ENCODE measurements at regions of chr7 and their contacts with region 1.

Region 1: GRCh38 chr7:3103614-3104398 is 60.1 kb upstream of the CARD11 start:
- DNase-seq: no peak
- H3K4me3 Mint-ChIP-seq: no peak overlapping the region
- H3K27ac Mint-ChIP-seq: peak overlapping the region; percentile 32
- H3K4me1 Mint-ChIP-seq: peaks cover 70% of the 10 kb centered on the region
- H3K27me3 Mint-ChIP-seq: no peaks in the 10 kb centered on the region

Region 2: DNA sequence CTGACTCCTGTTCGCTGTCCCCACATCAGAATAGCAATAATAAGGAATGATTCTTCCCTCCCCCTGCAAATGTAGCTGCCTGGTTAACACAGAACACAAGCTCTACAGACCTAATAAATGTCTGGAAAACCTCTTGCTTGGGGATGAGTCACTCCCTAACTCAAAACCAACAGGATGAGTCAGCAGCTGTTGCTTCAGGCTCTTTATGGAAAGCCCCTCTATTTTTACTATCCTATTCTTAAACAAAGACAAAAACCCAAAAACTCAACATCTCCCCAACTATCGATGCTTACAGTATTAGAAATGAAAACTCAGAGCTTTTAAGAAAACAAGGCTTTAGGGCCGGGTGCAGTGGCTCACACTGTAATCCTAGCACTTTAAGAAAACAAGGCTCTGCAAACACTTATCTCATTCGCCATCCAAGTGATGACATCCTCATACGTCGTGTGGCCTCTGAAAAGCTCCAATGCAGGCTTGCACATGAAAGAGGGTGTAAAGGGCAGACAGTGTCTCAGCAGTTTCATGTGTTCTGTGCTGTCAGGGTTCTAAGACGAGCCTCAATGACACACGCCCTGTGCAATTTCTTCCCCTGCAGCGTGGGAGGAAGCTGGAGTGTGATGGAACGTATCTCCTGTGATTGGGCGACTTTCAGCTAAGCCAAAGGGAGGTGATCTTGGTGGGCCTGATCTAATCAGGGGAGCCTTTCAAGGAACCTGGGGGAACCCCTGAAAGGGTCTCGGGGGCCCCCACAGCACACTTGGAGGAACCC is 345.7 kb before region 1 on chr7:
- intact Hi-C with region 1: loop called (anchors 5 kb)
- DNase-seq: peak; percentile 72
- H3K4me3 Mint-ChIP-seq: peak overlapping the region; percentile 59
- H3K27ac Mint-ChIP-seq: peak overlapping the region; percentile 95
- H3K4me1 Mint-ChIP-seq: peaks cover 63% of the 10 kb centered on the region
- H3K27me3 Mint-ChIP-seq: no peaks in the 10 kb centered on the region

Region 3: DNA sequence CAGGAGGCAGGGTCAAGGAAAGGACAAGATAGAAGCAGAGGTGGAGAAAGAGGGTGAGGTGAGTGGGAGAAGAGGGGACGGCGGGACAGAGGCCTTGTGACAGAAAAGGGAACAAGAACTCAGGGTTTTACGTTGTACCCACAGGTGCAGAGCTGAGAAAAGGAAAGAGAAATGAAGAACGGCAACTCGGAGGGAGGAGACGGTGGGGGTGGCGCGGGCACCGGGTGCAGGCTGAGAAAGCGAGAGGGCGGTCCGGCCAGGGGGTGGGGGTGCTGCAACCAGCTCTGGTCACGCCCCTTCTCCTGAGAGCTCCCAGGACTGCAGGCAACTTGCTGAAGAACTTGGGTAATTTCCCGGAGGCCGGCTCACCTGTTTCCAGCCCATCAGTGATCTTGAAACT is 125.4 kb before region 1 on chr7:
- intact Hi-C with region 1: loop called (anchors 1 kb)
- DNase-seq: peak; percentile 78
- H3K4me3 Mint-ChIP-seq: peak overlapping the region; percentile 67
- H3K27ac Mint-ChIP-seq: peak overlapping the region; percentile 89
- H3K4me1 Mint-ChIP-seq: peaks cover 64% of the 10 kb centered on the region
- H3K27me3 Mint-ChIP-seq: no peaks in the 10 kb centered on the region

Region 4: DNA sequence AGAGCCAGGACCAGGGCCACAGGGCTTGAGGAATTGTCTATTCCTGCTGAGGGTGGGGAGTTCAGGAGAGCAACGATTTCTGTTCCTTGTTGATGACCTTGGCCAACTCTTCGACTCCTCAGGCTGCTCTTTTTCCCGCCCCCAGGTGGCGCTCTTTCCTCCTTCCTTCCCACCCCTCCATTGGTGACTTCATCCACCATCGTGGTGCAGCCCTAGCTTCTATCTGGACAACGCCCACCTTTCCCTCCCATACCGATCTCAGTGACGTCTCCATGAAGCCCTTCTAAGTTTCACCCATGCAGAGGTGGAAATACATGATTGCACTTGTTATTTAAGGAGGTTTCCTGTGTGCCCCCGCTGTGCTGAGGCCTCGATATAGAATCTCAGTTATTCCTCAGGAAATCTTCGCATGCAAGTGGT is 38.1 kb before region 1 on chr7:
- intact Hi-C with region 1: loop called (anchors 1 kb)
- DNase-seq: peak; percentile 37
- H3K4me3 Mint-ChIP-seq: no peak overlapping the region
- H3K27ac Mint-ChIP-seq: peak overlapping the region; percentile 78
- H3K4me1 Mint-ChIP-seq: peaks cover 88% of the 10 kb centered on the region
- H3K27me3 Mint-ChIP-seq: no peaks in the 10 kb centered on the region

Region 5: DNA sequence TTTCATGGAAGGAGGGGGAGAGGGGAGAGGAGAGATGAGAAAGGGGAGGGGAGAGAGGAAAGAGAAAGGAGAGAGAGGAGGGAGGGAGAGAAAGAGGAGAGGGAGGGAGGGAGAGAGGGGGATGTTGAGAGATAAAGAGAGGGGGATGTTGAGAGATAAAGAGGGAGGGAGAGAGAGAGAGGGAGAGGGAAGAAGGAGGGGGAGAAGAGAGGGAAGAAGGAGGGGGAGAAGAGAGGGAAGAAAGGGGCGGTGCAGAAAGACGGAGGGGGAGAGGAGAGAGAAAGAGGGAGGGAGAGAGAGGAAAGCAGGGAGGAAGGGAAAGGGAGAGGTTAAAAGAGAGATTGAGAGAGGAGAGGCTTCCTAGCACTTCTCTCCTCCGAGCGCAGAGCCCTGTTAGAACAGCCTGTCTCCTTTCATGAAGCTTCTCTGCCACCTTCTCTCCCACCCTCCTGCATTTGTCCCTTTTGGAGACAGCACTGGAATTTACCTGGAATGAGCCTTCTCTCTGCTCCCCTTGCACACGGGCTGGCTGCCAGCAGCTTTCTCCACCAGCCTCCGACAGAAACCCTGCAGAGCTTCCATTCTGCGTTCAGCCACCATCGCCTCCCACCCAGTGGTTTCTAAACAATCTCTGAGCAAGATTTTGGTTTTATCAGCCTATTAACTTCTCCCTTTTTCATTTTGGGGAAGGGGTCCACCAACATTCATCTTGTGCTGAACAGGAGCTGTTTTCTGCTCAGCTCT is 13.9 kb after region 1 on chr7:
- intact Hi-C with region 1: loop called (anchors 1 kb)
- DNase-seq: no peak
- H3K4me3 Mint-ChIP-seq: peak overlapping the region; percentile 86
- H3K27ac Mint-ChIP-seq: peak overlapping the region; percentile 90
- H3K4me1 Mint-ChIP-seq: peaks cover 68% of the 10 kb centered on the region
- H3K27me3 Mint-ChIP-seq: peaks cover 5% of the 10 kb centered on the region

Region 6: DNA sequence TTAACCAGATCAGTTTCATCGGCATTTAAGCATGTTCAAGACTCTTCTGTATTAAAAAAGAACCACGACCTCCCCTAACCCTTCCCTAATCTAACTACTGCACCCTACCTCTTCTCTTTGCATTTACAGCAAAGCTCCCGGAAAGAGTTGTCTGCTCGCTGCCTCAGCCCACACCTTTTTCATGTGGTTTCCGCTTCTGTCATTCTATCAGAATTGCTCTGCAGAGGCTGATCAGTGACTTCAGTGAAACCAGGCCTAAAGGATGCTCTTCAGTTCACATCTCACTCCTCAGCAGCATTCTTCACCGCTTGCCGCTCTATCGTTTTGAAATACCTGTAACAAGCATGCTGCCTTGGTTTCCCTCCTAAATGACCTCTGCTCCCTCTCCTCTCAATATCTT is 358.1 kb after region 1 on chr7:
- intact Hi-C with region 1: loop called (anchors 10 kb)
- DNase-seq: peak; percentile 72
- H3K4me3 Mint-ChIP-seq: peak overlapping the region; percentile 72
- H3K27ac Mint-ChIP-seq: peak overlapping the region; percentile 74
- H3K4me1 Mint-ChIP-seq: peaks cover 32% of the 10 kb centered on the region
- H3K27me3 Mint-ChIP-seq: peaks cover 3% of the 10 kb centered on the region